Activated CD8-positive, alpha-beta T cell treated with anti-CD3 and anti-CD28 coated beads for 36 hours (primary cell): ENCODE measurements at regions of chr12 and their contacts with region 1.

Region 1: GRCh38 chr12:46124848-46125619 is 134.7 kb upstream of the SCAF11 start:
- DNase-seq: peak; percentile 73
- ATAC-seq: peak; percentile 98
- H3K4me3 Mint-ChIP-seq: peak overlapping the region; percentile 2
- H3K27ac Mint-ChIP-seq: no peak overlapping the region
- H3K4me1 Mint-ChIP-seq: peaks cover 5% of the 10 kb centered on the region
- H3K27me3 Mint-ChIP-seq: peaks cover 6% of the 10 kb centered on the region
- CTCF ChIP-seq: peak; percentile 60

Region 2: GRCh38 chr12:46027172-46027571 is 97.9 kb before region 1 on chr12:
- CTCF ChIA-PET with region 1: no interaction called
- POLR2A ChIA-PET with region 1: no interaction called
- intact Hi-C with region 1: no loop called
- DNase-seq: no peak
- ATAC-seq: no peak
- H3K4me3 Mint-ChIP-seq: no peak overlapping the region
- H3K27ac Mint-ChIP-seq: no peak overlapping the region
- H3K4me1 Mint-ChIP-seq: no peaks in the 10 kb centered on the region
- H3K27me3 Mint-ChIP-seq: peaks cover 1% of the 10 kb centered on the region
- CTCF ChIP-seq: no peak

Region 3: DNA sequence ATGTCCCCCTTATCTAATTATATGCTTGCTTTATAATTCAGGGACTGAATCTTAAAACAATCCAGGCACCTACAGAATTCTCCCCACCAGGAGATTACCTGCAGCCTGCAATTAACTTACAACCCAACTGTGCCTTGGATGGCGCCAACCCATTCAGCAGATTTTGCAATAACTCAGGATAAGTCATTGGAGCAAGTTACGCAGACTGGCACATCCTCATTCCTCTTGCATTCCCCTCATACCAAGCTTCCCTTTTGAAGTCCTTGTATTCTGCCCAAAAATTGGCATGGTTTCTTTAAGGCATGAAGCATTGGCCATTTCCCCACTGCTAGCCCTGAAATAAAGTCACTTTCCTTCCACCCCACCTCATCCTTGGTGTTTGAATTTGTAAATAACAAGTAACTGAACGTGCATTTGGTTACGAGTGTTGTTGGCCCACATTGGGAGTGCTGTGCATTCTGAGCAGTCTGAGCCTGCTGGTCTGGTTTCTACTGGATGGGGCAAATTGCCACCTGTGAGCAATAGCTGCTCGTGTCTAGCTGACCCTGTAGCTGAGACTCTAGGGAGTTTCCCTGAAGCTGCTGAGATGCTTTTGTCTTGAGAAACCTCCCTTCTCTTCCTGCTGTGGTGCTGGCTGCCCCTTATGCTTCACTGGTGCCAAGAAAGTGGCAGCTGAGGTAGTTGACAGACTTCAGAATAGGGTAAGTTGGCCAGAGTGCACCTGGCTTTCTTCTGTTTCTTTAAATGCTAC is 35.5 kb before region 1 on chr12:
- CTCF ChIA-PET with region 1: interaction called, 10 read pairs
- POLR2A ChIA-PET with region 1: no interaction called
- intact Hi-C with region 1: no loop called
- DNase-seq: no peak
- ATAC-seq: no peak
- H3K4me3 Mint-ChIP-seq: no peak overlapping the region
- H3K27ac Mint-ChIP-seq: no peak overlapping the region
- H3K4me1 Mint-ChIP-seq: no peaks in the 10 kb centered on the region
- H3K27me3 Mint-ChIP-seq: peaks cover 2% of the 10 kb centered on the region
- CTCF ChIP-seq: no peak

Region 4: GRCh38 chr12:46144433-46144832 is 19.4 kb after region 1 on chr12:
- CTCF ChIA-PET with region 1: interaction called, 17 read pairs
- POLR2A ChIA-PET with region 1: no interaction called
- intact Hi-C with region 1: no loop called
- DNase-seq: no peak
- ATAC-seq: peak; percentile 34
- H3K4me3 Mint-ChIP-seq: no peak overlapping the region
- H3K27ac Mint-ChIP-seq: no peak overlapping the region
- H3K4me1 Mint-ChIP-seq: no peaks in the 10 kb centered on the region
- H3K27me3 Mint-ChIP-seq: peaks cover 11% of the 10 kb centered on the region
- CTCF ChIP-seq: no peak

Region 5: GRCh38 chr12:46253544-46254162 is 128.6 kb after region 1 on chr12:
- CTCF ChIA-PET with region 1: no interaction called
- POLR2A ChIA-PET with region 1: no interaction called
- intact Hi-C with region 1: no loop called
- DNase-seq: no peak
- ATAC-seq: no peak
- H3K4me3 Mint-ChIP-seq: no peak overlapping the region
- H3K27ac Mint-ChIP-seq: peak overlapping the region; percentile 61
- H3K4me1 Mint-ChIP-seq: peaks cover 79% of the 10 kb centered on the region
- H3K27me3 Mint-ChIP-seq: no peaks in the 10 kb centered on the region
- CTCF ChIP-seq: no peak

Region 6: GRCh38 chr12:46268590-46269558 is 143.8 kb after region 1 on chr12 and contains the start of gene SLC38A1:
- CTCF ChIA-PET with region 1: interaction called, 19 read pairs
- POLR2A ChIA-PET with region 1: interaction called, 3 read pairs
- intact Hi-C with region 1: no loop called
- DNase-seq: peak; percentile 92
- ATAC-seq: peak; percentile 57
- H3K4me3 Mint-ChIP-seq: no peak within 1 kb of the TSS
- H3K27ac Mint-ChIP-seq: no peak within 1 kb of the TSS
- H3K4me1 Mint-ChIP-seq: peaks cover 29% of the 10 kb centered on the region
- H3K27me3 Mint-ChIP-seq: no peaks in the 10 kb centered on the region
- CTCF ChIP-seq: no peak
- total RNA-seq, gene SLC38A1: 167 to 168 TPM

Region 7: GRCh38 chr12:46357438-46358324 is 232.6 kb after region 1 on chr12:
- CTCF ChIA-PET with region 1: interaction called, 13 read pairs
- POLR2A ChIA-PET with region 1: interaction called, 3 read pairs
- intact Hi-C with region 1: no loop called
- DNase-seq: no peak
- ATAC-seq: no peak
- H3K4me3 Mint-ChIP-seq: no peak overlapping the region
- H3K27ac Mint-ChIP-seq: peak overlapping the region; percentile 47
- H3K4me1 Mint-ChIP-seq: peaks cover 37% of the 10 kb centered on the region
- H3K27me3 Mint-ChIP-seq: no peaks in the 10 kb centered on the region
- CTCF ChIP-seq: no peak

Region 8: GRCh38 chr12:46983393-46984266 is 858.6 kb after region 1 on chr12:
- CTCF ChIA-PET with region 1: interaction called, 16 read pairs
- POLR2A ChIA-PET with region 1: no interaction called
- intact Hi-C with region 1: no loop called
- DNase-seq: peak; percentile 53
- ATAC-seq: peak; percentile 67
- H3K4me3 Mint-ChIP-seq: no peak overlapping the region
- H3K27ac Mint-ChIP-seq: no peak overlapping the region
- H3K4me1 Mint-ChIP-seq: no peaks in the 10 kb centered on the region
- H3K27me3 Mint-ChIP-seq: peaks cover 10% of the 10 kb centered on the region
- CTCF ChIP-seq: peak; percentile 72